Adrenal gland (tissue), 19 donors: ENCODE measurements at regions of chr19 and their contacts with region 1.

Region 1: DNA sequence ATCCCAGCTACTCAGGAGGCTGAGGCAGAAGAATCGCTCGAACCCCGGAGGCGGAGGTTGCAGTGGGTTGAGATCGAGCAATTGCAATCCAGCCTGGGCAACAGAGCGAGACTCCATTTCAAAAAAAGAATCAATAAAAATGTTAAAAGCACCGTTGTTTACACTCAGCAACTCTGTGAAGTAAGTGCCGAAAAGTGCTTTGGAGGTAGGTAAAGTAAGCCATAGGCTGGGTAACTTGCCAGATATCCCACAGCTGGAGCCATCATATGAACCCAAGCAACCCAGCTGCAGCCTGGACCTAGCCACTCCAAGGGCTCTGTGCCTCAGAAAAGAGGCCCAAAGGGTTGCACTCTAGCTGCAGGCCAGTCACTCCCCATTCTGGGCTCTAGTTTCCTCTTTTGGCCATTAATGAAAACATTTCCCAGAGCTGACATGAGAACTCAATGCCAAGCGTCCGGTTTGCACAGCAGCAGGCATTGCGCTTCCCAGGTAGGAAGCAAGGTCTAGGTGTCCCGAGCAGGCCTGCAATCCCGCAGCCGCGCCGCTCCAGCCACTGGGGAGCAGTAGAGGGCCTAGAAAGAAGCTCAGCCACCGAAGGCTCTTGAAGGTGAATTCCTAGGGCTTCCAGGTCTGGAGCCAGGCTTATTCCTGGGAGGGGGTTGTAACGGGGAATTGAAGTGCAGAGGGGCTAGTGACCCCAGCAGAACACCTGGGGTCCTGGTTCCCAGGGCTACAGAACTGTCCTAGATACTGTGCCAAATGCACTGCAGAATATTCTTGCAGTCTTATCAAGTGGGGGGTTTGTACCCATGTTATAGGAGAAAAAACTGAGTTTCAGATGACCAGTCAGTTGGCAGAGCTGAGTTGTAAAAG is 4.1 kb upstream of the CD79A start:
- DNase-seq: peak; percentile 58 to 76 (median 67)
- H3K4me3 ChIP-seq: no peak overlapping the region
- H3K27ac ChIP-seq: no peak overlapping the region
- H3K4me1 ChIP-seq: no peaks in the 10 kb centered on the region
- H3K27me3 ChIP-seq: no peaks in the 10 kb centered on the region
- CTCF ChIP-seq: peak; percentile 25 to 67 (median 56)
- POLR2A ChIP-seq: no peak

Region 2: DNA sequence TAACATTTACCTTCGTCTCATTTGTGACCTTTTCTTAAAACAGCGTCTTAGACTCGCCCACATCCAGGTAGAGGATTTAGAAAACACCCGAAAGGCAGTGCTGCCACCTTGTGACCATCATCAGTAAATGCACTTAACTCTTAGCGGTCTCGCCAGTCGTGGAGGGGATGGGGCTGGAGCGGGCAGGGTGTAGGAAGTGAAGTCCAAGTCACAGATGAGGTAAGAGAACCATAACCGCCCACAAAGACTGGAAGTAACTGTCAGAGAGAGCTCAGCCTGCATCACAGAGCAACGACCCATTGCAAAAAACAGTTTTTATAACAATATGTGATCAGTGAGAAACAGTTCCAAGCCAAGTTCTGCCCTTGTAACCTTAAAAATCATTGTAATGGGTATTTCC is 87.4 kb before region 1 on chr19:
- intact Hi-C with region 1: no loop called
- DNase-seq: peak in 6 of 7 donors; percentile 21 to 63 (median 56)
- H3K4me3 ChIP-seq: no peak overlapping the region
- H3K27ac ChIP-seq: no peak overlapping the region
- H3K4me1 ChIP-seq: no peaks in the 10 kb centered on the region
- H3K27me3 ChIP-seq: peaks cover 32% of the 10 kb centered on the region
- CTCF ChIP-seq: peak; percentile 19 to 66 (median 52)
- POLR2A ChIP-seq: no peak

Region 3: GRCh38 chr19:41811036-41811435 is 62.0 kb before region 1 on chr19:
- intact Hi-C with region 1: no loop called
- DNase-seq: peak in 2 of 7 donors; percentile 18 to 31
- H3K4me3 ChIP-seq: no peak overlapping the region
- H3K27ac ChIP-seq: peak overlapping the region in 1 of 5 donors; percentile 22
- H3K4me1 ChIP-seq: no peaks in the 10 kb centered on the region
- H3K27me3 ChIP-seq: no peaks in the 10 kb centered on the region
- CTCF ChIP-seq: no peak
- POLR2A ChIP-seq: no peak

Region 4: GRCh38 chr19:41837981-41838708 is 34.9 kb before region 1 on chr19:
- intact Hi-C with region 1: no loop called
- DNase-seq: no peak
- H3K4me3 ChIP-seq: no peak overlapping the region
- H3K27ac ChIP-seq: no peak overlapping the region
- H3K4me1 ChIP-seq: no peaks in the 10 kb centered on the region
- H3K27me3 ChIP-seq: peaks cover 25% of the 10 kb centered on the region
- CTCF ChIP-seq: no peak
- POLR2A ChIP-seq: no peak

Region 5: DNA sequence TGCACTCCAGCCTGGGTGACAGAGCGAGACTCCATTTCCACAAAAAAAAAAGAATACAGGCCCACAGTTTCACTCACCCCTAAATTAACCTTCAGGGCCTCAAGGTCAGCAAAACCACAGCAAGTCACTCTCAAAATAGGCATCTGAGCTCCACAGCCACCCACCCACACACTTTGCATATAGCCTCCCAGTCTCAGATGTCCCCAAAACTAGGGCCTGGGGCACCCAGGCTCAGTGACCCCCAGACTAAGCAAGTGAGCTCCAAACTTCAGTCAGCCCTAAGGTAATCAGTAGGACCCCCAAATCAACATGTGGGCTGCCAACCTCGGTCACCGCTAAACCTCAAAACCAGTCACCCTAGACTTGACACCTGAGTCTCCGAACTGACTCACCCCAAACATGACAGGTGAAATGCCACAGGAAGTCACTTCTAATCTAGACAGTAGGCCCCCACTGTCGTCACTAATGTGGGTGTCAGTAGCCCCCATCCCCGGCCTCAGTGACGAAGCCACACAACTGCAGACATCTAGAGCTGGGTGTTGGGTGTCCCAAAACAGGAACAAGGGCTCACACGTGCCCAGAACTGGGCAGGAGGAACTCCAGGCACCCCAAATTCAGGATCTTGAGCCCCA is 72.2 kb after region 1 on chr19:
- intact Hi-C with region 1: loop called (anchors 5 to 10 kb)
- DNase-seq: peak in 4 of 7 donors; percentile 27 to 59 (median 32)
- H3K4me3 ChIP-seq: no peak overlapping the region
- H3K27ac ChIP-seq: no peak overlapping the region
- H3K4me1 ChIP-seq: peaks cover 6 to 8% of the 10 kb centered on the region in 2 donors
- H3K27me3 ChIP-seq: peaks cover 16% of the 10 kb centered on the region
- CTCF ChIP-seq: no peak
- POLR2A ChIP-seq: no peak

Region 6: GRCh38 chr19:41959056-41960053 is 86.3 kb after region 1 on chr19 and contains the start of gene RABAC1:
- intact Hi-C with region 1: loop called in 1 of 2 experiments (anchors 10 kb)
- DNase-seq: peak; percentile 82 to 94 (median 86)
- H3K4me3 ChIP-seq: peak within 1 kb of the TSS; percentile 41 to 95 (median 53)
- H3K27ac ChIP-seq: peak within 1 kb of the TSS in 4 of 5 donors; percentile 68 to 93 (median 79)
- H3K4me1 ChIP-seq: peaks cover 7 to 14% of the 10 kb centered on the region in 2 donors
- H3K27me3 ChIP-seq: no peaks in the 10 kb centered on the region
- CTCF ChIP-seq: peak in 1 of 6 experiments; percentile 4
- POLR2A ChIP-seq: no peak
- total RNA-seq, gene RABAC1: 106 to 397 (median 183) TPM